ENCODE measurements at regions of chr20 and their contacts with region 1.

Region 1: GRCh38 chr20:62302341-62303058 is at the start of gene ADRM1:
- DNase-seq: peak; percentile 91
- H3K4me3 ChIP-seq: peak within 1 kb of the TSS; percentile 86
- H3K27ac ChIP-seq: peak within 1 kb of the TSS; percentile 95
- H3K27me3 ChIP-seq: no peaks in the 10 kb centered on the region
- CTCF ChIP-seq: peak; percentile 88
- polyA plus RNA-seq, gene ADRM1: 58.5 and 80.7 TPM in 2 replicates

Region 2: GRCh38 chr20:62376112-62377063 is 73.9 kb after region 1 on chr20:
- CTCF ChIA-PET with region 1: interaction called, 50 read pairs
- POLR2A ChIA-PET with region 1: interaction called, 12 read pairs
- DNase-seq: no peak
- H3K4me3 ChIP-seq: no peak overlapping the region
- H3K27ac ChIP-seq: peak overlapping the region; percentile 31
- H3K27me3 ChIP-seq: no peaks in the 10 kb centered on the region
- CTCF ChIP-seq: peak; percentile 47

Region 3: DNA sequence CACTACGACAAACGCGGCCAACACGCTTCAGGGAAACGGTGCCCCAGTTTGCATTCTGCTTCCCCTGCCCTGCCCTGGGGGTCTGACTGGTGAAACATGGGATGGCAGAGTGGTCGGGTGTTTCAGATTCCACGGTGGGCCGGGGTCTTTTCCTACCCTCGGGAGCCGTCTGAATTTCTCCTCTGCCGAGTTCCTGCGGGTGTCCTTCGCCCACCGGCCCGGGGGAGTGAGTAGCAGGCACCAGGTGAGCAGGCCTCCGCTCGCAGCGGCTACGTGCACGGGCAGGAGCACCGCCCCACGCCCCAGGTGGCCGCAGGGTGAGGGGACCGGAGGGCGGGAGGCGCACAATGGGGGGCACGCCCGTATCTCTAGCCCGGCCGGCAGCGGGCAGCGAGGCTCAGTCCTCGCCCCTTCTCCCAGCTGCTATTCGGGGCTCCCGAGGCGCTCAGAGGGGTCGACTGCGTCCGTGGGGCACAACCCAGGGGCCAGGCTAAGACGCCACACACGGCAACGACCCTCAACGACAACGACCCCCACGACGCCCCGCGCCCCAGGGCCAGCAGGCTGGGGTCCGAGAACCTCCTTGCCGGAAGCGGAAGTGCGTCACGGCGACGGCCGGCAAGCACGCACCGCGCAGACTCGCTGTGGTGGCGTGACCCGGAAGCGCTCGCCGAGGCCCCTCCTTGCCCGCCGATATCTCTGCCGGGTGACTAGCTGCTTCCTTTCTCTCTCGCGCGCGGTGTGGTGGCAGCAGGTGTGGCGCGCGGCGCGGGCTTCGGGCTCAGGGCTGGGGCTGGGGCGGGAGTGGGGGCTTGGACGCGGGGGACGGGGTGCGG is 84.1 kb after region 1 on chr20 and contains the start of gene RPS21:
- CTCF ChIA-PET with region 1: interaction called, 35 read pairs
- POLR2A ChIA-PET with region 1: interaction called, 4 read pairs
- DNase-seq: peak; percentile 61
- H3K4me3 ChIP-seq: peak within 1 kb of the TSS; percentile 99
- H3K27ac ChIP-seq: peak within 1 kb of the TSS; percentile 61
- H3K27me3 ChIP-seq: no peaks in the 10 kb centered on the region
- CTCF ChIP-seq: no peak
- polyA plus RNA-seq, gene RPS21: 2,351 and 2,723 TPM in 2 replicates

Measured in AG04450 (cell line).